ENCODE measurements at regions of chr15 and their contacts with region 1.

Region 1: DNA sequence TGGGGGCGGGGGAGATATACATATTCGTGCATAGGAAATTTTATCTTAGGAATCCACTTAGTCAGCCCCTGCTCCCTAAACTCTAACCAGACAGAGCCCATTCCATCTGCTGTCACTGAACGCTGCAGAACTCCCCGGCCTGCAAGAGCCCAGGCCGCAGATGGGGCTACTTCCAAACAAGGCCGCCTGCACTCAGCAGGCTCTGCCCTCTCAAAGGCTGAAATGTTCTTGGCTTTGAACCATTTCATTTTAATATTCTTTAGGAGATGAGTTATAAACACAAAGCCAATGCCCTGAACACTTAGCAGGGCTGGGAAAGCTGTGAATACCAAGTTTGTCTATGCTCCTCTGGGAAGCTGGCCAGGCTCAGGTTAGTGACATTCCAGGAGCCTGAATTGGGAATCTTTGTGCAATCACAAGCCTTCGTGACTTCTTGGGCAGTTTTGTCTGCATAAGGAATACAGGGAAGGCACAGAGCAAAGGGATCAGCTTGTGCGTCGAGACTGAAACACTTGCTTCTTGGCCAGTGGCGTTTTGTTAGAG is 65.0 kb downstream of the SYNM start:
- DNase-seq: peak; percentile 7

Region 2: DNA sequence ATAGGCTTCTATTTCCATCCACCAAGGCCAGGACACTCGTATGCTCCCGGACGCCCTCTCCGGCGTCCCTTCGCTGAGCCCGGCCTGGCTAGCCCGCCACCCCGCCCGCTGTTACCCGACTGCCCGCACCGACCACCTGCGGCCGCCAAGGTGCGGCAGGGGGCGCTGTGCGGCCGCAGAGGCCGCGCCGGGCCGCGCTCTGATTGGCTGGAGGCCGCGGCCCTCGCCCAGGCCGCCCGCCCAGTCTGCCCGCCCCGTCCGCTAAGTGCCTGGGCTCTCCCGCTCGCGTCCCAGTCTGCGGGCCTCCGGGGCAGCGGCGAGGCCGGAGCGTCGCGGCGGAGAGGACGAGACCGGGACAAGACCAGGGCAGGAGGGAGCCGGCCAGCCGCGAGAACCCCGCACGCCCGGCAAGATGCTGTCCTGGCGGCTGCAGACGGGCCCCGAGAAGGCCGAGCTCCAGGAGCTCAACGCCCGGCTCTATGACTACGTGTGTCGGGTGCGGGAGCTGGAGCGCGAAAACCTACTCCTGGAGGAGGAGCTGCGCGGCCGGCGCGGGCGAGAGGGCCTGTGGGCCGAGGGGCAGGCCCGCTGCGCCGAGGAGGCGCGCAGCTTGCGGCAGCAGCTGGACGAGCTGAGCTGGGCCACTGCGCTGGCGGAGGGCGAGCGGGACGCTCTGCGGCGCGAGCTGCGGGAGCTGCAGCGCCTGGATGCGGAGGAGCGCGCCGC is 64.9 kb before region 1 on chr15 and contains the start of gene SYNM:
- in situ Hi-C with region 1: loop called (anchors 5 kb)
- DNase-seq: peak; percentile 40
- total RNA-seq, gene SYNM: 21.8 and 26.1 TPM in 2 replicates

Region 3: DNA sequence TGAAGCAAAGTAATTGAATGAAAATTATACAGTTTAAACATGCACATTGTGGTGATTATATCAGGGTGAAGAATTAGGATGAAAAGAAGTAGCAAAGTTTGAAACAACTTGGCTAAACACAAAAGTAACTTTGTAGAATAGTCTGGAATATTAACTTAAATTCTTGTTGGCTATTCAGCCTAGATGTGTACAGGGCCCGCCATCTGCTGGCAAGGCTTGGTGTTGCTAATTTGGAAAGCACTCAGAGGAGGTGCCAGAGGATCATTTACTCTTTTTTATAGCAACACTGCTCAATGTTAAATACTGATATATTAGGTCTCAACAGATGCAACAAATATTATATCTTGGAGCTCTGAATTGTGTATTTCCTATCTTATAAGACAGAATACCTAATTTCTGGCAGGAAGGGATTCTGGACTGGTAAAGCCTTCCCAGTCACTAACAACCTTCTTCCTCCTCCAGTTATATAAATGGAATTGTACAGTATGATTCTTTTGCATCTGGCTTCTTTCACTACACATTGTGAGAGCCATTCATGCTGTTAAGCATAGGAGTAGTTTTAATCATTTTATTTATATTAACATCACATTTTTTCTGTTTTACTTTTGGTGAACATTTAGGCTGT is 43.5 kb after region 1 on chr15:
- in situ Hi-C with region 1: loop called (anchors 5 kb)
- DNase-seq: peak; percentile 49

Measured in G401 (cell line).